ENCODE measurements at regions of chr3 and their contacts with region 1.

Region 1: DNA sequence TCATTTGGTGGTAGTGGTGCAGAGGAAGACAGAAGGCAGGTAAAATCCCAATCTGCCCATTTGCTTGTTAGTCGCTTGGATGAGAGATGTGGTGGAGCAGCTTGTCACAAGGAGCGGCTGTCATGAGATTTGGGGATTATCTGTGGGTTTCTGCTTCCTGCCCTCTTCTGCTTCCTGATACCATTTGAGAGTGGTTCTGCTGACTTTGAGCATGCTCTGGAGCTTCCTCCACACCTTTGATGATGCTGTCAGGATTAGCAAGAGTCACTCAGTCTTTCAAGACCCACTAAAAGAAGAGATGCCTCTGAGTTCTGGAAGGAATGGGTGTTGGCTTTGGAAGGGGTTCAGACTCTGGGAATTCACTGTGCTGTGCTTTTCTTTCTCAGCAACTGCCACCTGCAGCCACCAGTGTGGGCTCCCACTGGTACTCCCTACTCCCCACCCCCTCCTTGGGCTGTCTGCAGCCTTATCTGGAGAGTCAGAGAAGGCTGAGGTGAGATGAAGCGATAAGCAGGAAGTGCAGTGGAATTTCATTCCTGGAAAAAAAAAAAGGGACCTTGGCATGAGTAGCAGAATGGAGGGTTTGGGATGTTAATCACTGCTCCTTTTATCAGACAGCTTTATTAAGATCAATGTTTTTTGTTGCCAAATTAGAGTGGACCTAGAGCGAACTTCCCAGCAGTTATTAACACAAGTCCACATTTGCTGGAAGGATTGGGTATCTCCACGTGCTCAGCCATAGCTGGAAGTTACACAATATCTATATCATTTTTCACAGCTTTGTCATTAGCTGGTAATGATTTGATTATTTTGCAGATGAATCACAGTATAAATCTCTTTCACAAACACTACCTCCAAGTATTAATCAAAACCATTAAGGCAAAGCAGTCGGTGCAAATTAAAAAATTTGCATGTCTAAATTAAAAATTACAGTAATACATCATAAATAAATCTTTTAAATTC is 233.0 kb upstream of the SATB1 start:
- DNase-seq: peak; percentile 64
- H3K4me3 Mint-ChIP-seq: peak overlapping the region; percentile 46
- H3K27ac Mint-ChIP-seq: peak overlapping the region; percentile 62
- H3K4me1 Mint-ChIP-seq: peaks cover 55% of the 10 kb centered on the region
- H3K27me3 Mint-ChIP-seq: no peaks in the 10 kb centered on the region

Region 2: DNA sequence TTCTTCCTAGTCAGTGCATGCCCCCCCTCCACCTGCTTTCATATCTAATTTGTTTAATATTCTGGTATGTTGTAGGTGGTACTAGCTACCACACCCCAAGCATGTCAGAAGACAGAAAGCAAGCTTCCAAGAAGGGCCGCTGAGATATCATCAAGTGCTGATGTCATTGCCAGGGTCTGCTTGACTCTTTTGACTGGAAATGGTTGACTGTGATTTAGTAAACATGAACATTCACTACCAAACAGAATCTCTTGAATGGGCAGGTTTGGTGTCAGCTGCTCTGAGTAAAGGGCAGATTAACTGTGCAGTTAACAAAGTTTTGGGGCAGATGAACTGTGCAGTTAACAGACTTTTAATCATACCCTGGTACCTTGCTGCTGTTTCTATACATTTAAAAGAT is 11.2 kb after region 1 on chr3:
- CTCF ChIA-PET with region 1: interaction called, 5 read pairs
- intact Hi-C with region 1: loop called (anchors 1 kb)
- DNase-seq: peak; percentile 68
- H3K4me3 Mint-ChIP-seq: no peak overlapping the region
- H3K27ac Mint-ChIP-seq: peak overlapping the region; percentile 76
- H3K4me1 Mint-ChIP-seq: peaks cover 49% of the 10 kb centered on the region
- H3K27me3 Mint-ChIP-seq: no peaks in the 10 kb centered on the region